MCF 10A (cell line): ENCODE measurements at regions of chr4 and their contacts with region 1.

Region 1: DNA sequence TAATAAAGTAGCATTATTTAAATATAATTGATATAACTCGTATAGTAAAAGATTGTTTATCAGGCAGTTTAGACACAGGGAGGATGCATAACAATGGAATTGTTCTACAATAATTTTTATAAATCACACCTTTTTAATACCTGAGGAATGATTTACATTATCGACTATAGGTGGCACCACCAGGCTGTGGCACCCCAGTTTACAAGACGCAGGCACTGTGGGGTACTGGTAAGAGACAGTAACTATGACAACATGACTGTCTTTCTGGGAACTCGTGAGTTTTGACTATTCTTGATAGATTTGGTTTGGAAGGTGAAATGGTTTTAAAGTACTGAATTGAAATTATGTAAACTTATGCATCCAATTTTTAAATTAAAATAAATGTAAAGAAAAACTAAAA is 27.1 kb upstream of the STBD1 start:
- DNase-seq: peak; percentile 10
- H3K4me3 Mint-ChIP-seq: no peak overlapping the region
- H3K27ac Mint-ChIP-seq: no peak overlapping the region
- H3K4me1 Mint-ChIP-seq: peaks cover 5% of the 10 kb centered on the region
- H3K27me3 Mint-ChIP-seq: no peaks in the 10 kb centered on the region
- CTCF ChIP-seq: no peak

Region 2: DNA sequence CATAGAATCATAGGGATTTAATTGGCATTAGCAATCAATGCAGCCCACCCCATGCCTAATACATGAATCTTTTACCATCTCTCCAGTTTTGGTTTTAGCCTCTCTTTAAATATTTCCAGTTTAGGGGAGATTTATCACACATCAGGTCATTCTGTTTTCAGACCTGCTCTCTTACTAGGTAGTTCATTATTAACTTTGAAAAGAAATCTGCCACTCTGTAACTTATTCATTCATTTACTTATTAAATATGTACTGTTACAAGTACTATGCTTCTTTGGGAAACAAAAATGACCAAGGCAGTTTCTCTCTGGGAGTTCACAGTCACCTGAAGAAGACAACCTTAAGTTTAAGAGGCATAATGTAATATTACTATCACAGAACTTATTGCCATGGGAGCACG is 492.9 kb before region 1 on chr4:
- CTCF ChIA-PET with region 1: no interaction called
- POLR2A ChIA-PET with region 1: no interaction called
- intact Hi-C with region 1: no loop called
- DNase-seq: no peak
- H3K4me3 Mint-ChIP-seq: no peak overlapping the region
- H3K27ac Mint-ChIP-seq: no peak overlapping the region
- H3K4me1 Mint-ChIP-seq: peaks cover 5% of the 10 kb centered on the region
- H3K27me3 Mint-ChIP-seq: no peaks in the 10 kb centered on the region
- CTCF ChIP-seq: no peak

Region 3: DNA sequence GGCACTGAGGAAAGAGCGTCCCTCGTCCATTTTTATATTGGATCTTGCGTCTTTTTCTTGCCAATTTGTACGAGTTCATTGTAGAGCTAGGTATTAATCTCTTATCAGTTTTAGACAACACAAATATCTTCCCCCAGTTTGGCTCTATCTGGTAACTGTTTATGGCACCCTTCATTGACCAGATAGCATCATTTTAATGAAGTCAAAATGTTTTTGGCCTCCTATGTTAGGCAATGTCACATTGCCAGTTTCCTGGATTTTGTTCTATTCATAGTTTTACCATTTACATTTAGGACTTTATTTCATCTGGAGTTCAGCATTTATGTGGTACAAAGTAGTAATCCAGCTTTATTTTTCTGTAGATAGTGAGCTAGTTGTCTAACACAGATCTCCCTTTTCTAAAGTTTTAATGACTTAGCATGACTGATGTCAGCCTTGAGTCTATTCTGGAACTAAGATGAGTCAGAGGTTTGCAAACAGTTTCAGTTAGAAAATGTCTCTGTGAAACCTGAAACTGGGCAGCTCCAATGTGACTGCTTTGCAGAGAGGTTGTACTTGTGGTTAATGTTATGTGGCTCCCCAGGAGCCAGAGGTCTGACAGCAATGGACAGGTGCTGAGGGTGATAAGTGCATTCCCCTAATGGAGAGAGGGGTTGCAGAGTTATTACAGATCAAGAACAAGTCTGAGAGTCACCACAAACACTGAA is 21.7 kb after region 1 on chr4:
- CTCF ChIA-PET with region 1: interaction called, 5 read pairs
- POLR2A ChIA-PET with region 1: interaction called, 12 read pairs
- intact Hi-C with region 1: no loop called
- DNase-seq: peak; percentile 89
- H3K4me3 Mint-ChIP-seq: no peak overlapping the region
- H3K27ac Mint-ChIP-seq: peak overlapping the region; percentile 54
- H3K4me1 Mint-ChIP-seq: peaks cover 40% of the 10 kb centered on the region
- H3K27me3 Mint-ChIP-seq: no peaks in the 10 kb centered on the region
- CTCF ChIP-seq: no peak